Endothelial cell of umbilical vein (primary cell): ENCODE measurements at regions of chr1 and their contacts with region 1.

Region 1: GRCh38 chr1:174262349-174263241 is 103.3 kb downstream of the RABGAP1L start:
- DNase-seq: peak; percentile 68
- H3K4me3 ChIP-seq: no peak overlapping the region
- H3K27ac ChIP-seq: no peak overlapping the region
- H3K4me1 ChIP-seq: no peaks in the 10 kb centered on the region
- H3K27me3 ChIP-seq: no peaks in the 10 kb centered on the region
- CTCF ChIP-seq: peak; percentile 47 to 57
- POLR2A ChIP-seq: no peak

Region 2: GRCh38 chr1:174105086-174105485 is 157.5 kb before region 1 on chr1:
- CTCF ChIA-PET with region 1: no interaction called
- POLR2A ChIA-PET with region 1: no interaction called
- dilution Hi-C with region 1: no loop called
- intact Hi-C with region 1: no loop called
- DNase-seq: no peak
- H3K4me3 ChIP-seq: no peak overlapping the region
- H3K27ac ChIP-seq: no peak overlapping the region
- H3K4me1 ChIP-seq: no peaks in the 10 kb centered on the region
- H3K27me3 ChIP-seq: peaks cover 2 to 4% of the 10 kb centered on the region in 2 experiments
- CTCF ChIP-seq: no peak
- POLR2A ChIP-seq: no peak

Region 3: GRCh38 chr1:174243451-174244000 is 19.1 kb before region 1 on chr1:
- CTCF ChIA-PET with region 1: interaction called, 17 read pairs
- POLR2A ChIA-PET with region 1: no interaction called
- dilution Hi-C with region 1: no loop called
- intact Hi-C with region 1: no loop called
- DNase-seq: no peak
- H3K4me3 ChIP-seq: no peak overlapping the region
- H3K27ac ChIP-seq: no peak overlapping the region
- H3K4me1 ChIP-seq: no peaks in the 10 kb centered on the region
- H3K27me3 ChIP-seq: no peaks in the 10 kb centered on the region
- CTCF ChIP-seq: no peak
- POLR2A ChIP-seq: no peak

Region 4: DNA sequence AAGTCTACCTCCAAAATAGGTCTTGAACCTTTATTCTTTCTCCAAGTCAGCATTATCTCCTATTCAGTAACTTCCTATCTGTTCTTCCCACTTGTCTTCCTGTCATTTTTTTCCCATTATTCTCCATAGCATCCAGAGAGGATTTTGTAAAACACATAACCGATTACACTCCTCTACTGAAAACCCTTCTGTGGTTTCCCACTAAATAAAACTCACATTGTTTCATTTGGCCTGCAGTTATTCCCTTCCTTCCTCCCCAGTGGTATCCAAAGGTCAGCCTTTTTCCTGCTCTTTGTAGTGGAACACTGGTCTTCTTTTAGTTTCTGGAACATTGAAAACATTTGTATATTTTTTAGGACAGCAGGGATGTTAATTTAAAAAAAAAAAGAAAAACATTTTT is 451.2 kb after region 1 on chr1:
- CTCF ChIA-PET with region 1: interaction called, 11 read pairs
- POLR2A ChIA-PET with region 1: no interaction called
- dilution Hi-C with region 1: no loop called
- intact Hi-C with region 1: no loop called
- DNase-seq: peak; percentile 39
- H3K4me3 ChIP-seq: no peak overlapping the region
- H3K27ac ChIP-seq: no peak overlapping the region
- H3K4me1 ChIP-seq: no peaks in the 10 kb centered on the region
- H3K27me3 ChIP-seq: no peaks in the 10 kb centered on the region
- CTCF ChIP-seq: no peak
- POLR2A ChIP-seq: no peak

Region 5: DNA sequence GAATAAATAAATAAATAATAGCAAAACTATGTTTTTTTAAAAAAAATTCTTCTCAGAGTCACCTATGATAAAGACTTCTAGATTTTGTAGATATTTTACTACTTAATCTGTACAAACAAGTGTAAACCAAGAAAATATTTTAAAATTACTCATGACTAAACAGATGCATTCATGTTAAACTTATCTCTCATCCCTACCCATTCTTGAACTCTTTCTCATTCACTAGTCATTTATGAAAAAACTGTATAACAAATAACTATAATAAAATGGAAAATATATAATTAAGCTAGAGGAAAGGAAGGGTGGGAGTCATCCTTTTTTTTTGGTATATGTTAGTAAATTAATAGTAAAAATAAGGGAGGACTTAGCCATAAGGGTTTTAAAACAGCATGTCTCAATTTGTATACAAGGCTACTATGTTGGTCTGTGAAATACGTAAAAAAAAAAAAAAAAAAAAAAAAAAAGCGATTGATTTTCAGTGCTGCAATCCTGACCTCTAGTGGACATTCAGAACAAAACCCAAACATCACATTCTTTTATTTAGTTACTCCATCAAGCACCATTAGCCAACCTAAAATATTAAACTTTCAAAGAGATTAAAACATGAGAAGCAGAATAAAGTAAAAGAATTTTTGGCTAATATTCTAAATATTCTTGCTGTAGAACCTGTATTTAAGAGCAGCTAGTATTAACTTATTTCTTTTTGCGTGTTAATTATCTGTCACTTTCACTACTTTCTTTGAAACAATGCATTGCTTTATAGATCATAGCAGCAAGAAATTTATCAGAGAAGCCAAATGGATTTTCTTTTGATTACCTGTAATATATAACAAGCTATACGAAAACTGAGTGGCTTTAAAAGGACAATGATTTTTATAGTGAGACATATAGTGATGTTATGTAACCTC is 481.3 kb after region 1 on chr1:
- CTCF ChIA-PET with region 1: interaction called, 279 read pairs
- POLR2A ChIA-PET with region 1: no interaction called
- dilution Hi-C with region 1: no loop called
- intact Hi-C with region 1: loop called (anchors 1 kb)
- DNase-seq: peak; percentile 52
- H3K4me3 ChIP-seq: no peak overlapping the region
- H3K27ac ChIP-seq: no peak overlapping the region
- H3K4me1 ChIP-seq: no peaks in the 10 kb centered on the region
- H3K27me3 ChIP-seq: no peaks in the 10 kb centered on the region
- CTCF ChIP-seq: peak; percentile 26 to 47
- POLR2A ChIP-seq: no peak

Region 6: GRCh38 chr1:174982971-174983689 is 720.5 kb after region 1 on chr1:
- CTCF ChIA-PET with region 1: interaction called, 12 read pairs
- POLR2A ChIA-PET with region 1: no interaction called
- dilution Hi-C with region 1: no loop called
- intact Hi-C with region 1: loop called (anchors 5 kb)
- DNase-seq: peak; percentile 66
- H3K4me3 ChIP-seq: no peak overlapping the region
- H3K27ac ChIP-seq: no peak overlapping the region
- H3K4me1 ChIP-seq: no peaks in the 10 kb centered on the region
- H3K27me3 ChIP-seq: no peaks in the 10 kb centered on the region
- CTCF ChIP-seq: peak; percentile 44 to 49
- POLR2A ChIP-seq: no peak

Region 7: GRCh38 chr1:175413367-175413766 is 1150.8 kb after region 1 on chr1:
- CTCF ChIA-PET with region 1: no interaction called
- POLR2A ChIA-PET with region 1: no interaction called
- dilution Hi-C with region 1: no loop called
- intact Hi-C with region 1: no loop called
- DNase-seq: no peak
- H3K4me3 ChIP-seq: no peak overlapping the region
- H3K27ac ChIP-seq: no peak overlapping the region
- H3K4me1 ChIP-seq: no peaks in the 10 kb centered on the region
- H3K27me3 ChIP-seq: no peaks in the 10 kb centered on the region
- CTCF ChIP-seq: no peak
- POLR2A ChIP-seq: no peak